ENCODE measurements at regions of chr7 and their contacts with region 1.

Region 1: GRCh38 chr7:17205910-17206905 is 92.2 kb upstream of the AHR start:
- DNase-seq: peak; percentile 3
- H3K4me3 ChIP-seq: no peak overlapping the region
- H3K27ac ChIP-seq: no peak overlapping the region
- H3K4me1 ChIP-seq: peaks cover 15% of the 10 kb centered on the region
- H3K27me3 ChIP-seq: no peaks in the 10 kb centered on the region
- CTCF ChIP-seq: no peak
- POLR2A ChIP-seq: no peak

Region 2: GRCh38 chr7:17234398-17235031 is 28.3 kb after region 1 on chr7:
- CTCF ChIA-PET with region 1: no interaction called
- POLR2A ChIA-PET with region 1: no interaction called
- dilution Hi-C with region 1: no loop called
- intact Hi-C with region 1: loop called (anchors 2 kb)
- DNase-seq: peak; percentile 90
- H3K4me3 ChIP-seq: no peak overlapping the region
- H3K27ac ChIP-seq: peak overlapping the region; percentile 76
- H3K4me1 ChIP-seq: peaks cover 28% of the 10 kb centered on the region
- H3K27me3 ChIP-seq: no peaks in the 10 kb centered on the region
- CTCF ChIP-seq: no peak
- POLR2A ChIP-seq: no peak

Region 3: GRCh38 chr7:17269341-17270221 is 63.4 kb after region 1 on chr7:
- CTCF ChIA-PET with region 1: no interaction called
- POLR2A ChIA-PET with region 1: no interaction called
- dilution Hi-C with region 1: no loop called
- intact Hi-C with region 1: no loop called
- DNase-seq: no peak
- H3K4me3 ChIP-seq: no peak overlapping the region
- H3K27ac ChIP-seq: no peak overlapping the region
- H3K4me1 ChIP-seq: peaks cover 6% of the 10 kb centered on the region
- H3K27me3 ChIP-seq: no peaks in the 10 kb centered on the region
- CTCF ChIP-seq: no peak
- POLR2A ChIP-seq: no peak

Region 4: GRCh38 chr7:17402628-17403278 is 196.5 kb after region 1 on chr7:
- CTCF ChIA-PET with region 1: no interaction called
- POLR2A ChIA-PET with region 1: no interaction called
- dilution Hi-C with region 1: no loop called
- intact Hi-C with region 1: no loop called
- DNase-seq: no peak
- H3K4me3 ChIP-seq: no peak overlapping the region
- H3K27ac ChIP-seq: no peak overlapping the region
- H3K4me1 ChIP-seq: peaks cover 19% of the 10 kb centered on the region
- H3K27me3 ChIP-seq: no peaks in the 10 kb centered on the region
- CTCF ChIP-seq: no peak
- POLR2A ChIP-seq: no peak

Region 5: GRCh38 chr7:17849504-17849903 is 643.3 kb after region 1 on chr7:
- CTCF ChIA-PET with region 1: no interaction called
- POLR2A ChIA-PET with region 1: no interaction called
- dilution Hi-C with region 1: no loop called
- intact Hi-C with region 1: no loop called
- DNase-seq: no peak
- H3K4me3 ChIP-seq: no peak overlapping the region
- H3K27ac ChIP-seq: no peak overlapping the region
- H3K4me1 ChIP-seq: peaks cover 7% of the 10 kb centered on the region
- H3K27me3 ChIP-seq: no peaks in the 10 kb centered on the region
- CTCF ChIP-seq: no peak
- POLR2A ChIP-seq: no peak